Ascending aorta (tissue), 2 donors: ENCODE measurements at regions of chr3 and their contacts with region 1.

Region 1: DNA sequence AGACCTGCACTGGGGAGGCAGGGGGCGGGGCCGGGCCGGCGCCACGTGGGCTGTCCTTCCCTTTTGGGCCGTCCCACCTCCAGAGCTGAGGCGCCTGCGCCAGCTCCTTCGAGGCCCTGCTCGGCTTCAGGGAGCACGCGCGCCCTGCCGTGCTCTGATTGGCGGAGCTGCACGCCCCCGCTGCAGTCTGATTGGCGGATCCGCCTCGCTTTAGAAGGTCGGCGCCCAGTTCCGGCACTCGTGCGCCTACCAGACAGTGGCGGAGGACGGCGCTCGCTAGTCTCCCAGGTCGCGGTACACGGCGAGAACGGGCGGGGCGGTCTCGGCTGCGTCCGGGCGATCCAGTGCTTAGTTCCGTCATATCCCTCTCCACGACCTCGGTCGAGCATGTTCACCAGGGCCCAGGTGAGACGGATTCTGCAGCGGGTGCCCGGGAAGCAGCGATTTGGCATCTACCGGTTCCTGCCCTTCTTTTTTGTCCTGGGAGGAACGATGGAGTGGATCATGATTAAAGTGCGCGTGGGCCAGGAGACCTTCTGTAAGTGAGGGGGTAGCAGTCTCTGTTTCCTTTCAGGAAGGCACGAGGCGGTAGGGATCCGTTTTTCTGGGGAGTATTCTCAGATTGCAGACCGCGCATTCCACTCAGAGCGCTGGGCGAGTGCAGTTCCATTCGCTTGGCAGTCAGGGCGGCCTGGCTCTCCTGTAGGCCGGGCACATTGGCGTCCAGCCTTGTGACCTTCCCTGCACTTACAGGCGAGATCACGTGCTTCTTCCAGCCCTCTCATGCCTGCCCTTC is at the start of gene UQCC5:
- DNase-seq: peak; percentile 95 to 98
- H3K4me3 ChIP-seq: peak within 1 kb of the TSS; percentile 74 to 78
- H3K27ac ChIP-seq: peak within 1 kb of the TSS; percentile 80 to 86
- H3K4me1 ChIP-seq: peaks cover 15 to 28% of the 10 kb centered on the region in 2 donors
- H3K27me3 ChIP-seq: no peaks in the 10 kb centered on the region
- CTCF ChIP-seq: peak in 1 of 3 experiments; percentile 2
- total RNA-seq, gene UQCC5: not detected

Region 2: GRCh38 chr3:52286777-52287110 is 249.8 kb before region 1 on chr3:
- intact Hi-C with region 1: loop called (anchors 5 kb)
- DNase-seq: no peak
- H3K4me3 ChIP-seq: peak overlapping the region; percentile 68 to 74
- H3K27ac ChIP-seq: peak overlapping the region; percentile 94 to 98
- H3K4me1 ChIP-seq: peaks cover 0 to 21% of the 10 kb centered on the region in 2 donors
- H3K27me3 ChIP-seq: no peaks in the 10 kb centered on the region
- CTCF ChIP-seq: no peak

Region 3: DNA sequence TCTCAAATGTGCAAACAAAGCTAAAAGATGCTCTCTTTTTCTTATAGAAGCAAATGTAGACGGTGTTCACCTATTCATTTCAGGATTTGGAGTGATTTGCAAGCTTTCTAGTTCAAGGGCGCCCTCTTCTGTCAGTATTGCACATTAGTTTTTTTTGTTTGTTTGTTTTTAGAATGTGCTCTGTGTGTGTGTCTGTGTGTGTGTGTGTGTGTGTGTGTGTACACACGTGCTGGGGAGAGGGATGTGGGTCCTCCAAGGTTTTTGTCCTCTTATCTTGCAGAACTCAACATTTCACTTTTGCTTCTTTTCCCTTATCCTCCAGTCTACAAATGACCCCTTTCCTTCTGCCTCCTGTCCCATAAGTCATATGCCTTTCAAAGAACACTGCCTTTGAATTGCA is 197.0 kb before region 1 on chr3:
- intact Hi-C with region 1: no loop called
- DNase-seq: no peak
- H3K4me3 ChIP-seq: no peak overlapping the region
- H3K27ac ChIP-seq: no peak overlapping the region
- H3K4me1 ChIP-seq: no peaks in the 10 kb centered on the region
- H3K27me3 ChIP-seq: no peaks in the 10 kb centered on the region
- CTCF ChIP-seq: peak; percentile 66 to 79 (median 68)

Region 4: GRCh38 chr3:52455283-52456168 is 81.0 kb before region 1 on chr3 and contains the start of gene NISCH:
- intact Hi-C with region 1: loop called (anchors 2 kb)
- DNase-seq: peak; percentile 46 to 95
- H3K4me3 ChIP-seq: peak within 1 kb of the TSS; percentile 93 to 94
- H3K27ac ChIP-seq: peak within 1 kb of the TSS; percentile 89 to 94
- H3K4me1 ChIP-seq: peaks cover 12 to 14% of the 10 kb centered on the region in 2 donors
- H3K27me3 ChIP-seq: no peaks in the 10 kb centered on the region
- CTCF ChIP-seq: no peak
- total RNA-seq, gene NISCH: 58.3 TPM

Region 5: DNA sequence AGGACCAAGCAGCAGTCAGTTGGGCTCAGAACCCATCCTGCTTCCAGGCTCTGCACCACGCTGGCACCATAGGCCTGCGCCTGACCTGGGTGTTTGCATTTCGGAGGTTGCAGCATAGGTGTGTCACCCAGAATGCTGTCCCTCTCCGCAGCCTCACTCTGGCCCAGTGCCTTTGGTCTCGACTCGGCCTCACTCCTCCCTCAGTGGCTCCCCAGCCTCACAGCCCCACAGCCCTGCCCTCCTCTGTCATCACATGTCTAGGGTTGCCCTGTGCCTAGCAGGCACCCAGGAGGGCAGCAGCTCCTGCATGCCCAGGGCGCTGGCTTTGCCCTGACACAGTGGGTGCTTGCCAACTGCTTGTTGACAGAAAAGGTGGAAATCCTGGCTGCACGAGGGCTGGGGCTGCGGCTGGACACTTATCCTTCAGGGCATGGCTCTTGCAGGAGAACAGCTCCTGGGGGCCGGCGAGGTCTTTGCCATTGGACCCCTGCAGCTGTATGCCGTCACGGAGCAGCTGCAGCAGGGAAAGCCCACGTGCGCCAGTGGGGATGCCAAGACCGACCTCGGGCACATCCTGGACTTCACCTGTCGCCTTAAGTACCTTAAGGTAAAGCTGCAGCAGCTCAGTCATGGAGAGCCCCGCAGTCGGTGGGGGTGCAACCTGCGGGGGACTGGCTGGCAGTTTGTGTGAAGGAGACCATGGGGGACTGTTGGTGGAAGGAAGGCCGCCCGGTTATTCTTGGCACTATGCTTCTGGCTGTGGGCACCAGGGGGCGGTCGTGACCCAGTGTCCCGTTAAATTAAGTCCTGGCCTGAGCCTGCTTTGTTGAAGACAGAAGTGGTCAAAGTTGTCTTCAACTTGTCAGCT is 65.0 kb before region 1 on chr3:
- intact Hi-C with region 1: loop called (anchors 2 kb)
- DNase-seq: peak in 1 of 2 donors; percentile 81
- H3K4me3 ChIP-seq: no peak overlapping the region
- H3K27ac ChIP-seq: no peak overlapping the region
- H3K4me1 ChIP-seq: peaks cover 3 to 5% of the 10 kb centered on the region in 2 donors
- H3K27me3 ChIP-seq: no peaks in the 10 kb centered on the region
- CTCF ChIP-seq: peak; percentile 59 to 68 (median 66)

Region 6: GRCh38 chr3:52552089-52552488 is 15.5 kb after region 1 on chr3:
- intact Hi-C with region 1: no loop called
- DNase-seq: no peak
- H3K4me3 ChIP-seq: no peak overlapping the region
- H3K27ac ChIP-seq: no peak overlapping the region
- H3K4me1 ChIP-seq: no peaks in the 10 kb centered on the region
- H3K27me3 ChIP-seq: no peaks in the 10 kb centered on the region
- CTCF ChIP-seq: no peak

Region 7: GRCh38 chr3:52897130-52898122 is 360.9 kb after region 1 on chr3 and contains the start of gene STIMATE:
- intact Hi-C with region 1: loop called (anchors 10 kb)
- DNase-seq: peak; percentile 53 to 93
- H3K4me3 ChIP-seq: peak within 1 kb of the TSS; percentile 68 to 91
- H3K27ac ChIP-seq: peak within 1 kb of the TSS; percentile 80 to 87
- H3K4me1 ChIP-seq: peaks cover 7 to 32% of the 10 kb centered on the region in 2 donors
- H3K27me3 ChIP-seq: no peaks in the 10 kb centered on the region
- CTCF ChIP-seq: no peak
- total RNA-seq, gene STIMATE: 18.9 TPM